ENCODE measurements at regions of chr10 and their contacts with region 1.

Region 1: DNA sequence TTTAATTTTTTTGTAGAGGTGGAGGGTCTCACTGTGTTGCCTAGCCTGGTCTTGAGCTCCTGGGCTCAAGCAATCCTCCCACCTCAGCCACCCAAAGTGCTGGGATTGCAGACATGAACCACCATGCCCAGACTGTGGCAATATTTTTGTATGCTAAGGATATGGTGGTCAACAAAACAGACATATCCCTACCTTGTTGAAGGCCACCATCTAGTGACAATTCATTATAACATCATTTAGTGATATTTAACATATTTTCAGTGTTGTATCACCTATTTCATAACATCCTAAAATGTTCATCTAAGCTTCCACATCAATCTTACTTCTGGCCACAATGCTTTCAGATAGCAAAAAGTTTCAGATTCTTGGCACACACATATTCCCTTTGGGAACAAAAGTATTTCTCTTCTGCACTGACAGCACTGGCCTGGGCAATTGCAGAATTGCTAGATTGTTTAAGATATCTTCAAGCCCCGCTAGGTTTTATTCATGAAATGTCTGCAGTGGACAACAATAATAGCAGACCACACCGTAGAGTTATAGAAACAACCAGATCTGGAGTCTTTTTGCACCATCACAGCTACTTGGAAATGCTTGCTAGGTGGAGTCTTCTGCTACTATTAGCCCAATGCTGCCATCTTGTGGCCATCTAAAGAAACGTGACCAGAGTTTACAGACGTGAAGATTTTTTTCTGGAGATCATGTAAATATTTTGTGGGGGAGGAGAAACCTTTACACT is 58.4 kb downstream of the DNAJC12 start:
- DNase-seq: peak; percentile 20 to 89 (median 62)
- ATAC-seq: peak; percentile 94
- H3K4me3 ChIP-seq: no peak overlapping the region
- H3K4me3 Mint-ChIP-seq: no peak overlapping the region
- H3K27ac ChIP-seq: no peak overlapping the region
- H3K27ac Mint-ChIP-seq: no peak overlapping the region
- H3K4me1 ChIP-seq: peaks cover 17% of the 10 kb centered on the region
- H3K4me1 Mint-ChIP-seq: peaks cover 22% of the 10 kb centered on the region
- H3K27me3 ChIP-seq: no peaks in the 10 kb centered on the region
- H3K27me3 Mint-ChIP-seq: no peaks in the 10 kb centered on the region
- CTCF ChIP-seq: peak; percentile 94

Region 2: DNA sequence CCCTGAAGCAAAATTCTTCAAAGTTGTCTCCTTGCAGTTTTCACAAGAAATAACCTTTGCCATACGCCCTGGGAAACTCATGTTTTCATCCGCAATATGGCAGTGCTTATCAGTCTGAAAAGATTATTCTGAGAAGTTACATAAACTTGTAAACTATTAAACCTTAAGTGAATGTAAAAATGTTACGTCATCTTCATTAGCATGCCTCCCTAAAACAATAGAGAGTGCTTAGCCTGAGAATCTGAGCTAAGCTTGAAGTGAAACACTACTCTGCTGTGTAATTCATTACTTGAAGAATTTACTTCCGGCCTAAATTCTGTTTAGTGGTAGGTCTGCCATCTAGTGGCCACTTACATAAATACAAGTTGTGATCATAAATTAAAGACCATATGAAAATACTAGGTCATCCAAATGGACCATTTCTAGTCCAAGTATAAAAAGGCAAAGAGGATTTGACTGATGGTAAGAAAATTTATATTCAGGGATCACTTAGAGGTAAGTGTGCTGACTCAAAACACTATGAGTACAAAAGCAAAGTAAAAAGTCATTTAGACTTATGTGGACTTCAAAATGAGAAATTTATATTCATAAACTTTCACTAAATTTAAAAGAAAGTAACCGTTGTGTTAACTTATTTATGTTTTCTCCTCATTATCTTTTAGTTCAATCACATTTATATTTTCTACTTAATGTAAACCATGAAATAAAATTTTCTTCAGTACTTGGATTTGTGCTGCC is 1598.9 kb before region 1 on chr10:
- CTCF ChIA-PET with region 1: interaction called, 3 read pairs
- POLR2A ChIA-PET with region 1: no interaction called
- intact Hi-C with region 1: loop called in 1 of 2 experiments (anchors 10 kb)
- DNase-seq: peak in 5 of 14 experiments; percentile 3 to 64 (median 46)
- ATAC-seq: peak; percentile 66
- H3K4me3 ChIP-seq: no peak overlapping the region
- H3K4me3 Mint-ChIP-seq: no peak overlapping the region
- H3K27ac ChIP-seq: no peak overlapping the region
- H3K27ac Mint-ChIP-seq: no peak overlapping the region
- H3K4me1 ChIP-seq: no peaks in the 10 kb centered on the region
- H3K4me1 Mint-ChIP-seq: no peaks in the 10 kb centered on the region
- H3K27me3 ChIP-seq: no peaks in the 10 kb centered on the region
- H3K27me3 Mint-ChIP-seq: no peaks in the 10 kb centered on the region
- CTCF ChIP-seq: peak; percentile 71

Region 3: GRCh38 chr10:67666416-67667034 is 113.1 kb before region 1 on chr10:
- CTCF ChIA-PET with region 1: interaction called, 9 read pairs
- POLR2A ChIA-PET with region 1: interaction called, 3 read pairs
- intact Hi-C with region 1: loop called (anchors 1 to 10 kb)
- DNase-seq: peak in 3 of 14 experiments; percentile 32 to 45 (median 39)
- ATAC-seq: peak; percentile 32
- H3K4me3 ChIP-seq: no peak overlapping the region
- H3K4me3 Mint-ChIP-seq: no peak overlapping the region
- H3K27ac ChIP-seq: no peak overlapping the region
- H3K27ac Mint-ChIP-seq: no peak overlapping the region
- H3K4me1 ChIP-seq: no peaks in the 10 kb centered on the region
- H3K4me1 Mint-ChIP-seq: no peaks in the 10 kb centered on the region
- H3K27me3 ChIP-seq: no peaks in the 10 kb centered on the region
- H3K27me3 Mint-ChIP-seq: peaks cover 5% of the 10 kb centered on the region
- CTCF ChIP-seq: peak; percentile 60

Region 4: DNA sequence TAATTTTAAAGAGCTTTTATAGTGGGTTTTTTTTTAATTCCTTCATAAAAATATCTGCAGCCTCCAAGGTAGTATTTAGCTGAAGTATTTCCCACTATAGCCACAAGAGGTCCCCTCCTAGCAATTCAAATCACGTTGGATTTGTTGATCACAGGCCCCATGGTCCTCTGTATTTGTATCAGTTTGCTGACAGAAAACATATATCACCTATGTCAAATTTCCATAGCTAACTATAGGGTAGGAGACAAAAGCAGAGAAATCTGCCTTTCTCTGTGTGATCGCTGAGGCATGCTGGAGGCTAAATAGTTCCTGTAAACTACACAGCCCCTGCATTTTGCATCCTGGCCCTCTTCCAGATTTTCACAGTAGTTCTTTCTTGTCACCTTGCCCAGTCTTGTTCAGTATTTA is 81.9 kb before region 1 on chr10:
- CTCF ChIA-PET with region 1: interaction called, 83 read pairs
- POLR2A ChIA-PET with region 1: interaction called, 28 read pairs
- intact Hi-C with region 1: loop called in 1 of 2 experiments (anchors 1 kb)
- DNase-seq: peak in 9 of 14 experiments; percentile 2 to 75 (median 10)
- ATAC-seq: peak; percentile 90
- H3K4me3 ChIP-seq: no peak overlapping the region
- H3K4me3 Mint-ChIP-seq: no peak overlapping the region
- H3K27ac ChIP-seq: no peak overlapping the region
- H3K27ac Mint-ChIP-seq: no peak overlapping the region
- H3K4me1 ChIP-seq: peaks cover 6% of the 10 kb centered on the region
- H3K4me1 Mint-ChIP-seq: peaks cover 15% of the 10 kb centered on the region
- H3K27me3 ChIP-seq: no peaks in the 10 kb centered on the region
- H3K27me3 Mint-ChIP-seq: peaks cover 39% of the 10 kb centered on the region
- CTCF ChIP-seq: peak; percentile 73

Region 5: DNA sequence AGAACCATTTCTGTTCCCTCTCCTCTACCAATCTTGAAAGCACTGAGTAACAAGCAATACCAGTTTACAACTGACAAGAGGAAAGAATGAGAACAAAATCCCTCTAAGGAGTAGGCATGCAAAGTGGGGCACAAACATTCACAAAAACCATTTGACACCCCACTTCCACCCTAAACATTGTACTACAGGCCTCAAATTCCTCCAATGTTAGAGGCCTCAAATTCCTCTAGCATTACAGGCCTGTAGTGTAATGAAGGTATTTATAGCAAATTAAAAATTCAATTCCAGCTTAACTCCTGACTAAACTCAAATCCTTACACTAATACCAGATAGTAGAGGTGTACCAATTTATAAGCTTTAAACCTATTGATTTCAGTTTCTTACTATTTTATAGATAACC is 190.2 kb after region 1 on chr10:
- CTCF ChIA-PET with region 1: no interaction called
- POLR2A ChIA-PET with region 1: no interaction called
- intact Hi-C with region 1: no loop called
- DNase-seq: no peak
- ATAC-seq: no peak
- H3K4me3 ChIP-seq: no peak overlapping the region
- H3K4me3 Mint-ChIP-seq: no peak overlapping the region
- H3K27ac ChIP-seq: no peak overlapping the region
- H3K27ac Mint-ChIP-seq: no peak overlapping the region
- H3K4me1 ChIP-seq: no peaks in the 10 kb centered on the region
- H3K4me1 Mint-ChIP-seq: peaks cover 19% of the 10 kb centered on the region
- H3K27me3 ChIP-seq: no peaks in the 10 kb centered on the region
- H3K27me3 Mint-ChIP-seq: no peaks in the 10 kb centered on the region
- CTCF ChIP-seq: no peak

Measured in CD4-positive, alpha-beta T cell (primary cell).